Gastrocnemius medialis (tissue), 4 donors: ENCODE measurements at regions of chr22 and their contacts with region 1.

Region 1: DNA sequence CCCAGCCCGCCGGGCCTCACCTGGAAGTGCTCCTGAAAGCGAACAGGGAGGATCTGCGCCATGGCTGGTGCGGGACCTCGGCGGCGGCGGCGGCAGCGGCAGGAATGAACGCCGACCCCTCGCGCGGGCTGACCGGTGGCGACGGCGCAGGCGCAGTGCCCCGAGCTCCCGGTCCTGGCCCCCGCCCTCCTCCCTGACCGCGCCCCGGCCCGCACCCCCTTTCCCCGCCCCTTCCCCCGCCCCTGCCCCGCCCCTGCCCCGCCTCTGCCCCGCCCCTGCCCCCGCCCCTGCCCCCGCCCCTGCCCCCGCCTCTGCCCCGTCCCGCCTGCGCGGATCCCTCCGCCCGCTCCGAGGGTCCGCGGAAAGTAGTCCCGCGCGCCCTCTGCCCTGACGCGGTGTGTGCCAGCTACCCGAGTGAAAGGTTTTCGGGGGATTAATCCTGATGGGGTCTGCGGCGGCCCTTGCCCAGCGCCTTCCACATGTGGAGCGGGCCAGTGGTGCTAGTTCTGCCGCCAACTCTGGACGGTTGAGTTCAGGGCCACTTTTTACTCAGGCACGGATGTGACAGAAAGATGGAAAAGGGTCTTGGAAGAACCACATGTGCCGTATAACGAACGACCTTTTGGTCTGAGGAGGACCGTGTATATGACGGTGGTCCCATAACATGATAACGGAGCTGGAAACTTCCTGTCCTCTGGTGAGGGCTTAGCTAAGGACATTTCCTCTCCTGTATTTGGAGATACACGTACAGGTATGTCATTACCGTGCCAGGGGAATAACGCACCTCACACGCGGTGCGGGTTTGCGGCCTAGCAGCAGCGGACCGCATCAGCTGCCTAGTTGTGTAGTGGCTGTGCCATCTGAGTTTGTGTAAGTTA is at the start of gene CLTCL1:
- DNase-seq: peak; percentile 81 to 84
- ATAC-seq: peak; percentile 0 to 3
- H3K4me3 ChIP-seq: peak within 1 kb of the TSS; percentile 86 to 98 (median 96)
- H3K27ac ChIP-seq: peak within 1 kb of the TSS; percentile 96 to 100 (median 97)
- H3K4me1 ChIP-seq: peaks cover 39 to 53% of the 10 kb centered on the region in 2 donors
- H3K27me3 ChIP-seq: no peaks in the 10 kb centered on the region
- CTCF ChIP-seq: no peak
- POLR2A ChIP-seq: peak; percentile 92 to 94
- total RNA-seq, gene CLTCL1: 111 to 311 (median 215) TPM

Region 2: DNA sequence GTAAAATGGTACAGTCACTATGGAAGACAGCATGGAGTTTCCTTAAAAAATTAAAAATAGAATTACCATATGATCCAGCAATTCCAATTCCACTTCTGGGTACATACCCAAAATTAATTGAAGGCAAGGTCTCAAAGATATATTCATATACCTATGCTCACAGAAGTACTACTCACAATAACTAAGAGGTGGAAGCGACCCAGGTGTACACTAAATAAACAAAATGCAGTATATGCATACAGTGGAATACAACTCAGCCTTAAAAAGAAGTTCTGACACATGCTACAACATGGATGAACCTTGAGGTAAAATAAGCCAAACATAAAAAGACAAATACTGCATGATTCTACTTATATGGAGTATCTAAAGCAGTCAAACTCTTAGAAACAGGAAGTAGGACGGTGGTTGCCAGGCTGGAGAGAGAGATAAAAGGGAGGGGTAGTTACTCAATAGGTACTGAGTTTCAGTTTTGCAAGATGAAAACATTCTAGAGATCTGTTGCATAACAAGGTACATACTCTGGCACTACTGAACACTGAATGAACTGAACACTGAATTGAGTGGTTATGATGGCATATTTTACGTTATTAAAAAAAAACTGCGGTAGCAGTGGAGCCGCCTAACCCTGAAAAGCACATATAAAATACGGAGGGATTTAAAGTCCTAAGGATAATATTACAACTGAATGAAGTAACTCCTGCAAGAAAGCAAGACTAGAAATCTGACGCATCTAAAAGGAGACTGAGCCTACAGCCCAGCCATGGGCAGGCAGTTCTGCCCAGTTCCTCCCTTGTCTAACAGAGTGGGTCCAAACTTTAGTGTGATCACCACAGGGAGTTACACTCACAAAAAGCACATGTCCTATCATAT is 182.4 kb before region 1 on chr22:
- in situ Hi-C with region 1: no loop called
- intact Hi-C with region 1: loop called (anchors 5 kb)
- DNase-seq: peak; percentile 65 to 74
- ATAC-seq: peak; percentile 93 to 95
- H3K4me3 ChIP-seq: peak overlapping the region in 2 of 4 donors; percentile 27 to 29
- H3K27ac ChIP-seq: peak overlapping the region; percentile 78 to 90 (median 82)
- H3K4me1 ChIP-seq: peaks cover 64 to 81% of the 10 kb centered on the region in 2 donors
- H3K27me3 ChIP-seq: no peaks in the 10 kb centered on the region
- CTCF ChIP-seq: no peak
- POLR2A ChIP-seq: no peak

Region 3: DNA sequence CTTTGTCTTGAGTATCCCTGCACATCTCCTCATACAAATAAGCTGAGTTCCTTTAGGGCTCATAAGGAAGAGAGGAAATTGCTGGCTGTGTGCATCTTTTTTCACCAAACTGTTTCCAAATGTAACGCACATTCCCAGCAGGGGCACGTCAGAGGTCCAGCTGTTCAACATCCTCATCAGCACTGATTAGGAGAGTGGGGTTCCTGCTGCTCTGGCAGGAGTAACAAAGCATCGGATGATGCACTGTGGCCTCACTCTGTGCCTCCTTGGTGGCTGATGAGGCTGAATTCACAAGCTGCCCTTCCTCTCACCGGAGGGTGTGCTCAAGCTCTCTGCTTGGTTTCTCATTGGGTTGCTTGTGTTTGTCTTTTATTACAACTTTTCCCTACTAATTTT is 77.7 kb before region 1 on chr22:
- in situ Hi-C with region 1: no loop called
- intact Hi-C with region 1: loop called (anchors 5 kb)
- DNase-seq: no peak
- ATAC-seq: no peak
- H3K4me3 ChIP-seq: no peak overlapping the region
- H3K27ac ChIP-seq: peak overlapping the region in 3 of 4 donors; percentile 83 to 90 (median 90)
- H3K4me1 ChIP-seq: peaks cover 26 to 43% of the 10 kb centered on the region in 2 donors
- H3K27me3 ChIP-seq: no peaks in the 10 kb centered on the region
- CTCF ChIP-seq: no peak
- POLR2A ChIP-seq: no peak

Region 4: GRCh38 chr22:19447388-19448075 is 155.7 kb after region 1 on chr22 and contains the start of gene C22orf39:
- in situ Hi-C with region 1: loop called in 2 of 4 experiments (anchors 10 kb)
- intact Hi-C with region 1: loop called (anchors 2 kb)
- DNase-seq: peak; percentile 93 to 94
- ATAC-seq: peak; percentile 90
- H3K4me3 ChIP-seq: peak within 1 kb of the TSS; percentile 77 to 93 (median 86)
- H3K27ac ChIP-seq: peak within 1 kb of the TSS; percentile 91 to 100 (median 96)
- H3K4me1 ChIP-seq: peaks cover 46 to 51% of the 10 kb centered on the region in 2 donors
- H3K27me3 ChIP-seq: no peaks in the 10 kb centered on the region
- CTCF ChIP-seq: peak in 3 of 5 experiments; percentile 6 to 16 (median 10)
- POLR2A ChIP-seq: peak; percentile 91 to 95
- total RNA-seq, gene C22orf39: 157 to 182 (median 178) TPM

Region 5: GRCh38 chr22:19745155-19746101 is 453.6 kb after region 1 on chr22:
- in situ Hi-C with region 1: no loop called
- intact Hi-C with region 1: loop called (anchors 5 kb)
- DNase-seq: peak; percentile 97 to 99
- ATAC-seq: peak; percentile 86 to 88
- H3K4me3 ChIP-seq: peak overlapping the region in 1 of 4 donors; percentile 2
- H3K27ac ChIP-seq: peak overlapping the region; percentile 85 to 98 (median 90)
- H3K4me1 ChIP-seq: peaks cover 19 to 36% of the 10 kb centered on the region in 2 donors
- H3K27me3 ChIP-seq: no peaks in the 10 kb centered on the region
- CTCF ChIP-seq: peak in 1 of 5 experiments; percentile 47
- POLR2A ChIP-seq: peak; percentile 55 to 57